HEK293 (cell line): ENCODE measurements at regions of chr5 and their contacts with region 1.

Region 1: DNA sequence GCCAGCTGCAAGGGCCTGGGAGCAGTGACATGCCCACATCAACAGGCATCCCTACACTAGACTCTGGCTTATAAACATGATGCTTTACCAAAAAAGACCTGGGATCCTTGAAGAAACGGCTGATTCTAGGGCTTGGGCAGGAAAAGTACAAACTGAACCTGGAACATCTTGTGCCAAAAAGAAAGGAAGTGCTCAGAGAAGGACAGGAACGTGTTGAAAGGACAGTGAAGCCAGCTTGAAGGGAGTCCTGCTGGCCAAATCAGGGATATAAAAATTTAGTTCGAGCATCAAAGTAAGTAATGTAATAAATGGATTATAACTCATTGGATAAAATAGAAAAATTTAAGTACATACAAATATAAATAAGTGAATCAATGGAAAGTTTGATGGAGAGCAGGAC is 58.1 kb downstream of the ALDH7A1 start:
- H3K4me3 ChIP-seq: no peak overlapping the region
- H3K27ac ChIP-seq: no peak overlapping the region
- H3K4me1 ChIP-seq: 0 out of 2 replicates have a peak, but pooled peaks cover 2% of the 10 kb centered on the region
- CTCF ChIP-seq: no peak

Region 2: DNA sequence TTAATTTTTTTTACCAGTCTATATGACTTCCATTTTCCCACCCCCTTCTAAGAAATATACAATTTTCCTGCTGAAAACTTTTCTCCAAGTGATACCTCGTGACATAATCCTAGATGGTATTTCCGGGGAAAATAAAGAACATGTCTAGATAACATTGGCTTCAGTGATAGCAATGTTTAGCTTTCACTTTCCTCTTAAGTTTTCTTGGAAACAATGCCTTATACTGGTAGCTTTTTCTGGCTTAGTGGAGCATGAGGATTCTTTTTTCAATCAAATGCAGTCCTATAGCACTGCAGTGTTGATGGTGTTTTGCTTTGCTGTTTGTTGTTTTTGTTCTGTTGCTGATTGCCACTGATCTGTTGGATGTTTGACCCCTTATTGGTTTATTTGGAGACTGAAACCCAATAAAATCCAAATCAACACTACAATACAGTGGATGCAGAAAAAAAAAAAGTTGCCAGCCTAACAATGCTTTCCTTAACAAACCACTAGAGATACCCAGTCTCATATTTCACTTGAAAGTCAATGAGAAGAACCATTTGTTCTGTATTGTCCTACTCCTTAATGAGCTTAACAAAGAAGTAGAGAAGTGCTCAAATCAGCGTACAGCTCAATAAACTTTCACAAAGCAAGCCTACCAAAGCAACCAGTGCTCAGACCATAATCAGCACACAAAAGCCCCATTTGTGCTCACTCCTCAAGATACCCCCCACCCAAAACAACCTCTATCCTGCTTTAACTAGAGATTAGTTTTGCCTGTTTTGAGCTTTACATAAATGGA is 187.8 kb before region 1 on chr5:
- CTCF ChIA-PET with region 1: interaction called, 65 read pairs
- POLR2A ChIA-PET with region 1: no interaction called
- H3K4me3 ChIP-seq: no peak overlapping the region
- H3K27ac ChIP-seq: no peak overlapping the region
- H3K4me1 ChIP-seq: no peaks in the 10 kb centered on the region; the same call in 1 of the 2 replicates
- CTCF ChIP-seq: no peak